ENCODE measurements at regions of chr13 and their contacts with region 1.

Region 1: DNA sequence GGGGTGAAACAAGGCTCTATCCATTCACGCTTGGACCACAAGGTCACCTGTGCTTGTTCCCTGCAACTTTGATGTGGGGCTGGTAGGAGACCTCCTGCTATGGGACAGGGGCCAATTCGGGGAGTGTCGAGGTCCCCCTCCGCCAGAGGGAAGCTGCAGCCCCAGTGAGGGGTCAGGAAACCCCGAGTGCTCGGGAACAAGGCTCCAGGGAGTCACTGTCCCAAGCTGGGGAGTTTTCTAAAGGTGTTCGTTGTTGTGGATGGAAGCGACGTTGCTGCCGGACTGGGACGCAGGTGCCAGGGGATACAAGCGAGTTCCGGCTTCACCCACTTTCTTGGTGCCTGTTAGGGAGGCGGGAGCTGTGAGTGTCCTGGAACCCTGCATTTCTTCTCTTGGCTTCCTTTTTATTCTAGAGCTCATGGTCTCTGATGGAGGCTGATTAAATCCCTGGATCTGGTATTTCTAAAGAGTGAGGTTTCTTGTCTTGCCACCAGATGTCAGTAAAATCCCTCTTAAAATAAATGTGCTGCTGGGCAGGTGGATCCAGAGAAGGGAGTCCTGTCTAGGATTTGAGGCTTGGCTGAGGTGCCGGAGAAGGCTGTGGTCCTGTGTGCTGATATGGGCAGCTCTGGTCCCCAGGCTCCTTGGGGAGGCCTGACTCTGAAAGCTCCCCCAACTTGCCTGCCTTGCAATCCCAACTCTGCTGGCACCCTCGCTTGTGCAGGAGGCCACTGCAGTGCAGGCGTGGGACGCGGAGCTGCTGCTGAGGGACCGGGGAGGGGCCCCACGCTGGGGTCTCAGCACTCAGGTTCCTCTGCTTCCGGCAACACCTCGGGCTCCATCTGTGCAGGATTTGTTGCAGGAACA is 153.9 kb downstream of the TEX29 start:
- DNase-seq: peak; percentile 25
- H3K4me3 ChIP-seq: no peak overlapping the region
- H3K27ac ChIP-seq: no peak overlapping the region
- H3K4me1 ChIP-seq: no peaks in the 10 kb centered on the region
- H3K27me3 ChIP-seq: no peaks in the 10 kb centered on the region
- CTCF ChIP-seq: peak; percentile 30 to 59 (median 49)
- POLR2A ChIP-seq: no peak

Region 2: DNA sequence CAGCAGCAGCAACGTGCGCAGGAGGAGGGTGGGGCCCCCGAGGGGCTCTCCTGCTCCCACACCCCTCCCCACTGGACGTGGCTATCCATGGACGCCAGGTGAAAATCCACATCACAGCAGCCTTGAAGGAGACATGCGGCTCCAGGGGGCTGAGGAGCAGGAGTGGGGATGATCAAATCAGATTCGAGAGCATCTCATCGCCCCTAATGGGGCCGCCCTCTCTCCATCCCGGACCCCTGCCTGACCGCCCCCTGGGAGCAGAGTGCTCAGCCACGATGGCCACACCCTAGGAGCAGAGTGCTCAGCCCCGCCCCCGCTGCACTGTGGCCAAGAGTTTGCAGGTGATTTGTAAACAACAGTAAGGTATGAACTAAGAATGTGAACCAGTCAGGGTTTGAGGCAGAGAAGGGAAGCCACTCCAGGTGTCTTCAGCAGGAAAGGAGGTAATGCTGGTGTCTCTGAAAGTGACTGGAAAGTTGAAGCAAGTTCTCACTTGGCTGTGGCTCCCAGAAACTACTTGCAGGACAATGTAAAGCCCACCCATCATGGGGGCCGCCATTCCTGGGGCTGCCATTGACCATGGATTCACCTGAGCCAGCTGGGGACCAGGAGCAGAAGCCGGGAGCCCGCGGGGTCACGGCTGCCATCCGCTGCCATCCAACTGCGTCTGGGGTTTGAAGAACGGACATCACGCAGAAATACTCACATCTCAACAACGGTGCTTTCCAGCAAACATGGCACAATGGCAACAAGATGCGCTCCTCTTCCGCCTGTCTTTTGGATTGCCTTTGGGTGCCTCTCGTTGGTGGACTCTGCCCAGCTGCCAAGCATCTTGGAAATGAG is 973.6 kb after region 1 on chr13:
- intact Hi-C with region 1: loop called (anchors 5 kb)
- DNase-seq: no peak
- H3K4me3 ChIP-seq: no peak overlapping the region
- H3K27ac ChIP-seq: no peak overlapping the region
- H3K4me1 ChIP-seq: no peaks in the 10 kb centered on the region
- H3K27me3 ChIP-seq: no peaks in the 10 kb centered on the region
- CTCF ChIP-seq: no peak
- POLR2A ChIP-seq: no peak

Region 3: DNA sequence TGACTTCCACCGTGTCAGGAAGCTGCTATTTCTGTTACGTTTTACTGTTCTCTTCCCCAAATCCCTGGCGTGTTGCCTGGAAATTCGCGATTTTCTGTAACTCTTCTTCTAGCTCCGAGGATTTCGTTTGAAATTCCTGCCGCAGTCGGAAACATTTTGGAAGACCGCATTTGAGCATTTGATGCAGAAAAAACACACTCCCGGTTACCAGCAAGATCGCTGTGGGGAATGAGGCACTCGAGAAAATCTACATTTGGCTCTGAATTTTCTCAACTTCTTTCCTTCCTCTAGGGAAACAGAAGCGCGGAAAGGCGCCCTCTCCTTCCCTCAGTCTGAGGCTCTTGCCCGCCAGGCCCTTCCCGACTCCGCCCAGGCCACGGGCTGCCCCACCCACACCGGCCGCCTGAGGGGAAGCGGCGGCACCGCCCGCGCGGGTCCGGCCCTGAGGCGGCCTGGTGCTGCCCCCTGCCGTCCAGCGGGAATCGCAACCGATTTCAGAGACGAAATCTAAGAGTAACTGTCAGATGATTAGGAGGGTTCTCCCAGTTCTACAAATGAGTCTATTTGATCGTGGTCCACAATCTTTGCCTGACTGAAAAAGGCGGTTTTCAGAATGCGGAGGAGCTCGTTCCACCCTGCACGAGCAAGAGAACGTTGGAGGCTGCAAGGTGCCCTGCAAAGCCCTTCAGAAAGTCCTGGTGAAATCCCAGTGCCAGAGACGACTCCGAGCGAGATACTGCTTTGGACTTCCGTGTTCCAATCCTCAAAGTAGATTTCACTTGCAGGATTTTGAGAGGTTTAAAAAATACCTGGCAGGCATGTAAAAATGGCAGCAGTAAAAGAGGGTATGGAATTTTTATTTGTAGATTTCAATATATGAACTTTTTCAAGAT is 1132.0 kb after region 1 on chr13:
- intact Hi-C with region 1: loop called (anchors 5 kb)
- DNase-seq: peak; percentile 95
- H3K4me3 ChIP-seq: peak overlapping the region; percentile 60 to 62
- H3K27ac ChIP-seq: peak overlapping the region; percentile 49 to 78
- H3K4me1 ChIP-seq: no peaks in the 10 kb centered on the region
- H3K27me3 ChIP-seq: no peaks in the 10 kb centered on the region
- CTCF ChIP-seq: peak; percentile 87 to 94 (median 88)
- POLR2A ChIP-seq: no peak